ENCODE measurements at regions of chr17 and their contacts with region 1.

Region 1: DNA sequence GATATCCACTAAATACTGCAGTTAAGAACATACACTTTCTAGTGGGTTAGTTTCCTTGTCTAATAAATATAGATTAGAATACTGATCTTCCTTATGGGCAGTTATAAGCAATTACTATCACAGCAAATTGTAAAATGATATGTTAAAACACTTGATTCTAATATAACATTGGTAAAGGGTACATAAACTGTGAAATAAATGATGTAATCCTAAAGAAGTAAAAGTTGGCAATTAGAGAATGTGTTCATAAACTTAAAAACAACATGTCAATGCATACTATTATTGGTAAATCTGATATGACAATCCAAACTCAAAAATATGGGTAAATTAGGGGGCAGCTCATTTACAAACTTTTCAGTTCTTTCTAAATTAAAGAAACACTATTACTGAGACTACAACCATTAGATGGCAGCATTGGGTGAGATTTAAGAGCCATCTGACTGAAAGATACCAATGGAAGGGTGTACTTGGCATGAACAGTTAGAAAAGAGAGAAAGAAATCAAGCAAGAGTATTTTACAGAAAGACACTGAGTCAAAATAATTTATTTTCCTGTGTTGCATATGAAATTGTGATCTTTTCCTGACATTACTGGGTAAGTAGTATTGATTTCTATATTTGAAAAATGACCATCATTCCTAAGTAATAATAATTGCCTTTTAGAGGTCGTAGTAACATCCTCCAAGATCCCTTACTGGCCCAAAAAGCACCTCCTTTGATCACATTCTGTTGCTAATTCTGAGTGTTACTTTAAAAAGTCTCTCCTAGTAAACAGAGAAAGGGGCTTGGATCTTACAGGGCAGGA is 119.6 kb downstream of the SPAG9 start:
- DNase-seq: peak; percentile 51
- CTCF ChIP-seq: peak; percentile 47

Region 2: DNA sequence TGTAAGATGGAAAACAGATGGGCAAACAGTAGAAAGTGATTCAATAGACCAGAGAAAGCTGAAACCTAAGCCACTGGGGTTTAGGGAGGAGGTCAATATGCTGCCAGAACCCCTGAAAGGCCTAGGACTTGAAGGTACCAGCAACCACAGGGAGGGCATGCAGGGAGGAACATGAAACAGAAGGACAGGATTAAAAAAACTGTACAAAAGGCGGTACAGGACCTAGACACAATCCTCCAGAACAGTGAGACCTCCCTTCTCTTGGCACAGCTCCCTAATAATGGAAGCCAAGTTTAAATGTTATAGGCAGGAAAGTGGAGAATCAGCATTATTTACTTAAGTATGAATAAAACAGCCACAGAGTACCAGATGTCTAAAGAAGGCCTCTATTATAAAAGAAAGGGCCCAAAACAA is 14.1 kb after region 1 on chr17:
- CTCF ChIA-PET with region 1: interaction called, 28 read pairs
- POLR2A ChIA-PET with region 1: interaction called, 3 read pairs
- DNase-seq: no peak
- CTCF ChIP-seq: no peak

Region 3: DNA sequence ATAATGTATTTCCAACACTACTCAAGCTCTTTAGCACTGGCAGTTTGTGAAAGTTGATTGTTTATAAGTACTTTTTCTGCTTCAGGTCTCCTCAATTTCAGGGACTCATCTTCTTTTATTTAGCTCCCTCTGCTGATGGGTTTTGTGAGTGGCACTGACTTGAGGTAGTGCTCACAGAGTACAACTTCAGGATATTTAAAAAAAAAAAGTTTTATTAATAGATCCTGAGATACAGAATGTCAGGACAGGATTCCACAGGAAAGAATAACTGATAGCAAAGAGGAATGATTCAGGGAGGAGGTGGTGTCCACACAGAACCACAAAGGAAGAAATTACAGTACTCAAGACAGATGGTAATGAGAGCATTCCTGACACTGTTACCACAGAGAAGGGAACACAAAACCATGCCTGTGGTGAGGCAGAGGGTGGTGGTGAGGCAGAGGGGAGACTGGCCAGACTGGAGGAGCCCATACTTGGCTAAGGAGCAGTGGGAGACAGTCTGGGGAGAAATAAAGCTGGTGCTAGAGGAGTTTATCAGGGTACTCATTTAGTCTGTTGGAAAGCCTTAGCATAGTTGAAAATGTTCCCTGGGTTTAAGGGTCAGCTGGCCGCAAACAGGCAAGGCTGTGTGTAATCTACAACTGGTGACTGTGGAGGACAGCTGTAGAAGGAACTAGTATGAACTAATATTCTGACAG is 55.9 kb after region 1 on chr17:
- CTCF ChIA-PET with region 1: interaction called, 133 read pairs
- POLR2A ChIA-PET with region 1: no interaction called
- DNase-seq: peak; percentile 49
- CTCF ChIP-seq: peak; percentile 65

Measured in GM10248 (cell line).